Activated CD8-positive, alpha-beta memory T cell treated with anti-CD3 and anti-CD28 coated beads, Interleukin-2, amount 10 ng/mL, durations not matched to agents 7 days and 5 days (primary cell): ENCODE measurements at regions of chr1 and their contacts with region 1.

Region 1: DNA sequence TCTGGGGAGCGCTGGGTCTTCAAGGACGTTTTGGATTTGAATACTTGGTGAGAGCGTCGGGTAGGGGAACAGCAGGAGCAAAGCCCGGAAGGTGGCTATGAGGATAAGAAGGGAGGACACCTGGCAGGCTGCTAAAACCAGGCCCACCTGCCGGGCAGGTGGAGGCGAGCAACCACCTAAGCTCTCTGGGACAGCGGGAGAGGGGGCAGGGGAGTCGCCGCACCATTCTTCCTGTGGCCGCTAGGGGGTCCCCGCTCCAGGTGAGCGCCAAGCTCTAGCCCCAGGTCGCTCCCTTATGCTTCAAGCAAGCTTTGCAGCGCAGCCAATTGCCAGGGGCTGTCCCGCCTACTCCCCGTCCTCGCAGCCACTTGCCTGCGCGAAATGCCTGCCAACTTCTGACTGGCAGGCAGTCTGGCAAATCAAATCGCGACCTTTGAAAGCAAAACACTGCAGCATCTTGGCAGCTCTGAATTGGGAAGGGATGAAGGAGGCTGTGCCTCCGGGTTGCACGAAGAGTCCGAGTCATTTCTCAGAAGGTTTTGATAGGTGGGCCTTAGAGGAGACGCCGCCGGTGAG is at the start of gene NIPAL3:
- DNase-seq: peak; percentile 100
- ATAC-seq: peak; percentile 97
- H3K4me3 Mint-ChIP-seq: peak within 1 kb of the TSS; percentile 90
- H3K27ac Mint-ChIP-seq: peak within 1 kb of the TSS; percentile 87
- H3K4me1 Mint-ChIP-seq: peaks cover 53% of the 10 kb centered on the region
- H3K27me3 Mint-ChIP-seq: no peaks in the 10 kb centered on the region
- total RNA-seq, gene NIPAL3: 35.4 to 44.2 TPM

Region 2: DNA sequence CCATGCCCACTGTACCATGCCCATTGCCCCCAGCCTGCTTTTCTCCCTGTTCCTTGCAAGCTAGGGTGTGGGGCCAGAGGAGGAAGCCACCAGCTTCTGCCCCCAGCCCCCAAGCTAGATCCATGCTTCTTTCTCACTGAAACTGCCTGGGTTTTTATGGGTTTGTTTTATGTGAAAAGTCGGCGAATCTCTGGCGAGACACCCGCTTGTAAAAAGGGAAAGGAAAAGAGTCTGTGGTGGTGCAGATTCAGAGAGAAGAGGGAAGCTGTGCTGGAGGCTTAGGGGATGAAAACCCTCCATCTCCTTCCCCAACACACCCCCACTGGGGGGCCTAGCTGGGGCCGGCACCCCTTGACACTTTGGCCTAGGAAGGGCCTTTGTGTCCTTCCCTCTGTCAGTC is 70.1 kb before region 1 on chr1:
- CTCF ChIA-PET with region 1: no interaction called
- DNase-seq: no peak
- ATAC-seq: no peak
- H3K4me3 Mint-ChIP-seq: no peak overlapping the region
- H3K27ac Mint-ChIP-seq: no peak overlapping the region
- H3K4me1 Mint-ChIP-seq: peaks cover 8% of the 10 kb centered on the region
- H3K27me3 Mint-ChIP-seq: peaks cover 4% of the 10 kb centered on the region

Region 3: GRCh38 chr1:24355466-24355865 is 60.0 kb before region 1 on chr1:
- CTCF ChIA-PET with region 1: no interaction called
- DNase-seq: no peak
- ATAC-seq: no peak
- H3K4me3 Mint-ChIP-seq: no peak overlapping the region
- H3K27ac Mint-ChIP-seq: no peak overlapping the region
- H3K4me1 Mint-ChIP-seq: peaks cover 24% of the 10 kb centered on the region
- H3K27me3 Mint-ChIP-seq: no peaks in the 10 kb centered on the region

Region 4: DNA sequence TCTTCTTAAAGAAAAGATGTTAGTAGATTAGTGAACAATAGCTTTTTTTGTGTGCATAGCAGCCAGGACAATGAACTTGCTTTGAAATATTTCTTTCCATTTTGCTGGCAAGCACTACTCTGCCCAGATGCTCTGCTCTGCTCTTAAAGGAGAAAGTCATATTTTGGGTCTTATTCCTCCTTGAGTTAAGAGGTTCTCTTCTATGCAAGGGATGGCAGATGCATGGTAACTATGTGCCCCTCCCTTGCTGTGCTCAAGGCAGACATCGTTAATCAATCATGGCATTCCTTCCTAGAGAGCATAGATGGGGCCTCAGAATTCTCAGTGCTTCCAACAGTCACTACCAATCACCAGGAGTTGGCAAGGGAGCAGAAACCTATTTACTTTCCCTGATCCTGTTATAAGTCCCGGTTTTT is 27.8 kb after region 1 on chr1:
- CTCF ChIA-PET with region 1: interaction called, 12 read pairs
- DNase-seq: no peak
- ATAC-seq: no peak
- H3K4me3 Mint-ChIP-seq: no peak overlapping the region
- H3K27ac Mint-ChIP-seq: no peak overlapping the region
- H3K4me1 Mint-ChIP-seq: no peaks in the 10 kb centered on the region
- H3K27me3 Mint-ChIP-seq: no peaks in the 10 kb centered on the region

Region 5: DNA sequence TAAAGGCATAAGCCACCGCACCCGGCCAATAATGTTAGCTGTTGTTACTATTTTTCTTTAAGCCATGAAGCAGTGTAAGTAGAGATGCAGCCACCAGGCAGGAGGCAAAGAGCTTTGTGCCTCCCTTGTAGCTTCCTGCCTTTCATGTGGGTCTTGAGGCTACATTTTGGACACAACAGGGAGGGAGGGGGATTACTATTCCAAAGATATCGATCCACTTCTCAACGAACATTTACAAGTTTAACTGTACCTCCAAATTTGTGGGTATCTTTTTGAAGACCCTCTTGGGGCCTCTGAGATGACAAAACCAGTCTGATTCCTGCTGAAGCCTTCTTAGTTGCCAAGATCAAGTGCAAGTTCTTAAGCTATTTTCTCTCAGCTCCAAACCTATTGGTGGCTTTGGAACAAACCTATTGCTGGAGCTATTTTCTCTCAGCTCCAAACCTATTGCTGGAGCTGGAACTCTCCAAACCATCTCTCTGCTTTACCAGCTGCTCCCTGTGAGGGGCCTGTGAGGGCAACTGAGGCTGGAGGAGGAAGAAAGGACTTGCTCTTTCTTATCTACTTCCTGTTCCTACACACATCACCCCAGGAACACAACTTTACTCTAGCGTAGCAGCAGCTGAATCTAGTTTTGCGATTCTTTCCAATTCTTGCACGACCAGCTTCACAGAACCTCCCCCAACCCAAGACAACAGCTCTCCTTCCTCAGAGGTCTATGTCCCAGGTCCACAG is 71.1 kb after region 1 on chr1:
- CTCF ChIA-PET with region 1: interaction called, 18 read pairs
- DNase-seq: no peak
- ATAC-seq: no peak
- H3K4me3 Mint-ChIP-seq: peak overlapping the region; percentile 3
- H3K27ac Mint-ChIP-seq: peak overlapping the region; percentile 84
- H3K4me1 Mint-ChIP-seq: peaks cover 45% of the 10 kb centered on the region
- H3K27me3 Mint-ChIP-seq: no peaks in the 10 kb centered on the region

Region 6: DNA sequence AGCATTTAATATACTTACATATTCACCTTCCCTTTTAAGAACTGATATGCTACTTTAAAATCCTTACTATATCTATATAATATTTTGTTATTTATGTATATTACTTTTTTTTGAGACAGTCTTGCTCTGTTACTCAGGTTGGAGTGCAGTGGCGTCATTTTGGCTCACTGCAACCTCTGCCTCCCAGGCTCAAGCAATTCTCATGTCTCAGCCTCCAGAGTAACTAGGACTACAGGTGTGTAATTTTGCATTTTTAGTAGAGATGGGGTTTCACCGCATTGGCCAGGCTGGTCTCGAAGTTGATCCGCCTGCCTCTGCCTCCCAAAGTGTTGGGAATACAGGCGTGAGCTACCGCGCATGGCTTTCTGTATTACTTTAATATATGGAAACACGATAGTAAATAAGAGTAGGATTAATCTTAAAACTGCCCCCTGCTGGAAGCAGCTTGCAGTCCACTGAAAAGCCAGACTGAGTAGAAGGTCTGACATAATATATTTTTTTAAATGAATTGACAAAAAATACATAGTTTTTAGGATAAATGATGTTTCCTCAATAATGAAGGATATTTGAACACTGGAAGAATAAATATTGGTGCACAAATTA is 111.6 kb after region 1 on chr1:
- CTCF ChIA-PET with region 1: interaction called, 53 read pairs
- DNase-seq: peak; percentile 65
- ATAC-seq: peak; percentile 47
- H3K4me3 Mint-ChIP-seq: no peak overlapping the region
- H3K27ac Mint-ChIP-seq: no peak overlapping the region
- H3K4me1 Mint-ChIP-seq: peaks cover 6% of the 10 kb centered on the region
- H3K27me3 Mint-ChIP-seq: no peaks in the 10 kb centered on the region

Region 7: DNA sequence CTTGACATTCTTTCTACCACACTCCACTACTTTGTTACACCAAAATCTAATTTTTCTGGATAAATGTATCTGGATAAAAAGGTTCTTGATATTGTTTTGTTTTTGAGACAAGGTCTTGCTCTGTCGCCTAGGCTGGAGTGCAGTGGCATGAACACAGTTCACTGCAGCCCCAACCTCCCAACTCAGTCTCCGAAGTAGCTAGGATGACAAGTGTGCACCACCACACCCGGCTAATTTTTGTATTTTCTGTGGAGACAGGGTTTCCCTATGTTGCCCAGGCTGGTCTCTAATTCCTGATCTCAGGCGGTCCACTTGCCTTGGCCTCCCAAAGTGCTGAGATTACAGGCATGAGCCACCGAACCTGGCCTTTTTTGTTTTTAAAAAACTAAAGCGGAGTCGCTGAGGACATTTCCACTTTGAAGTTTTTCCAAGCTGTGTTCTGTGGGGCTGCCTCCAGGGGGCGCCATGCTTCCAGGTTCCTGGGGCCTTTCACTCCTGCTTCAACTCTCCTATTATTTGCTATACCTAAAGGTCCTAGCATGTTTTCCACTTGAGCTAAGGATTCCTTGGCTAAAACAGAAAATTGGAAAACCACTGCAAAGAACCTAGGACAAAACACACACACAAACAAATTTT is 126.4 kb after region 1 on chr1:
- CTCF ChIA-PET with region 1: interaction called, 43 read pairs
- DNase-seq: peak; percentile 50
- ATAC-seq: no peak
- H3K4me3 Mint-ChIP-seq: no peak overlapping the region
- H3K27ac Mint-ChIP-seq: peak overlapping the region; percentile 81
- H3K4me1 Mint-ChIP-seq: peaks cover 56% of the 10 kb centered on the region
- H3K27me3 Mint-ChIP-seq: no peaks in the 10 kb centered on the region

Region 8: DNA sequence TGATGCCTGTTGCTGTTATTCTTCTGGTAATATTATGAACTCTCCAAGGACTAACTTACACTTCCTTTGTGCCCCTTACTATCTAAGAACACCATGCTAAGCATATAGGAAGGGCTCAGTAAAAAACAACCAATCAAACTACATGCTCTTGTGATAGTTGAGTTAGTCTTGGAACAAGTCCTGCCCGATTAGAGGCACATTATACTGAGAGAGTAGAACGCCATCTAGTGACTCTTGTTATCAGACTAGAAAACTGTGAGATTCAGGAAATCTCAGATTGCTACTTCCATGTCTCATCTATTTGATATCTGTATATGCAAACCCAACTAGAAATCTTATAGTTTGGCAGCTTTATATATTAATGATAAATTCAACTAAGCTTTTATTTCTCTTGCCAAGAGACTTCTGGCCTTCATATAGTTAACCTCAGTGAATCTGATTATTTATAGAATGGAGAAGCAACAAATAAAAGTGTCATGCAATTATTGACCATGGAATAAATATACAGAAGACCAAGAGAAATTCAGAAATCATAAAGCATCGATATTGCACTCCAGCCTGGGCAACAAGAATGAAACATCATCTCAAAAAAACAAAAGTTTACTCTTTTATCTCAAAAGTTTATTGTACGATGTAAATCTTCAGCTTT is 219.9 kb after region 1 on chr1:
- CTCF ChIA-PET with region 1: interaction called, 12 read pairs
- DNase-seq: no peak
- ATAC-seq: peak; percentile 79
- H3K4me3 Mint-ChIP-seq: no peak overlapping the region
- H3K27ac Mint-ChIP-seq: no peak overlapping the region
- H3K4me1 Mint-ChIP-seq: peaks cover 6% of the 10 kb centered on the region
- H3K27me3 Mint-ChIP-seq: peaks cover 32% of the 10 kb centered on the region

Region 9: GRCh38 chr1:25503551-25504426 is 1088.4 kb after region 1 on chr1:
- CTCF ChIA-PET with region 1: no interaction called
- DNase-seq: peak; percentile 66
- ATAC-seq: peak; percentile 75
- H3K4me3 Mint-ChIP-seq: no peak overlapping the region
- H3K27ac Mint-ChIP-seq: no peak overlapping the region
- H3K4me1 Mint-ChIP-seq: peaks cover 6% of the 10 kb centered on the region
- H3K27me3 Mint-ChIP-seq: peaks cover 7% of the 10 kb centered on the region